ENCODE measurements at regions of chr1 and their contacts with region 1.

Region 1: DNA sequence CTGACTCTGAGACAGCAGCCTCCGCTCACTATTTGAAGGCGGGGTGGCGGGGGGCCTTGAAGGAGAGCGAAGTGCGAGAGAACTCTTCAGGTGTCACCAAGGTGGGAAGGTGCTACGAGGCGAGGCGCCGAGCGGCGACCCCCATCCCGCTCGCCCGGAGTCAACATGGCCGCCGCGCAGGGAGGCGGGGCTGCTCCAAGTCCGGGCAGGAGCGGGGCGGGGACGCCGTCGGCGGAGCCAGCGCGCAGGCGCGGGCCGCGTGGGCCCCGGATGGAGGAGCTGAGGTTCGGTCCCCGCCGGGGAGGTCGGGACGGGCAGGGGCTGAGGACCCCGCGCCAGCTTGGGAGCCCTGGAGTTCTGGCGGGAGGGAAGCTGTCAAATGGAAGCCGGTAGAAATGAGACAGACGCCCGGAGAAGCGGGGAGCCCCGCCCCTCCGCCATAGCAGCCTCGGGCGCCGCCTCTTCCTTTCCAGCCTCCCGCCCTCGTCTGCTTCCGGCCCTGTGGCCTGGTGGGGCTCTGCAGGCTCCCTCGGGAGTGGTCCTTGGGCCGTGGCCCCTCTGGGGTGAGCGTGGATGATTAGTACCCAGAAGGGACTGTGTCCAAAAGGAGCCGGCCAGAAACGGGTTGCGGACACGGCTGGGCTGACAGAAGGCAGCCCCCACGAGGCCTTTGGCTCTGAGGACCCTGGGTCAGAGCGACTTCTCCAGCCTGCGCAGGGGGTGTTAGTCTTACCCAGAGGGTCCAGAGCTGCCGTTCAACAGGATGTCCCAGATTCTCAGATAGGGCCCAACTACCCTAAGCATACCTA is at the start of gene PIGV:
- DNase-seq: peak; percentile 93
- ATAC-seq: peak; percentile 74
- H3K4me3 Mint-ChIP-seq: peak within 1 kb of the TSS; percentile 81
- H3K27ac Mint-ChIP-seq: peak within 1 kb of the TSS; percentile 100
- H3K4me1 Mint-ChIP-seq: peaks cover 70% of the 10 kb centered on the region
- H3K27me3 Mint-ChIP-seq: peaks cover 2% of the 10 kb centered on the region
- total RNA-seq, gene PIGV: 8.6 to 9.7 TPM

Region 2: GRCh38 chr1:26602378-26602959 is 185.4 kb before region 1 on chr1:
- CTCF ChIA-PET with region 1: interaction called, 272 read pairs
- DNase-seq: no peak
- ATAC-seq: no peak
- H3K4me3 Mint-ChIP-seq: no peak overlapping the region
- H3K27ac Mint-ChIP-seq: no peak overlapping the region
- H3K4me1 Mint-ChIP-seq: peaks cover 15% of the 10 kb centered on the region
- H3K27me3 Mint-ChIP-seq: peaks cover 28% of the 10 kb centered on the region

Region 3: GRCh38 chr1:26677306-26678115 is 110.4 kb before region 1 on chr1:
- CTCF ChIA-PET with region 1: interaction called, 25 read pairs
- DNase-seq: peak; percentile 70
- ATAC-seq: peak; percentile 98
- H3K4me3 Mint-ChIP-seq: no peak overlapping the region
- H3K27ac Mint-ChIP-seq: peak overlapping the region; percentile 19
- H3K4me1 Mint-ChIP-seq: peaks cover 20% of the 10 kb centered on the region
- H3K27me3 Mint-ChIP-seq: no peaks in the 10 kb centered on the region

Region 4: DNA sequence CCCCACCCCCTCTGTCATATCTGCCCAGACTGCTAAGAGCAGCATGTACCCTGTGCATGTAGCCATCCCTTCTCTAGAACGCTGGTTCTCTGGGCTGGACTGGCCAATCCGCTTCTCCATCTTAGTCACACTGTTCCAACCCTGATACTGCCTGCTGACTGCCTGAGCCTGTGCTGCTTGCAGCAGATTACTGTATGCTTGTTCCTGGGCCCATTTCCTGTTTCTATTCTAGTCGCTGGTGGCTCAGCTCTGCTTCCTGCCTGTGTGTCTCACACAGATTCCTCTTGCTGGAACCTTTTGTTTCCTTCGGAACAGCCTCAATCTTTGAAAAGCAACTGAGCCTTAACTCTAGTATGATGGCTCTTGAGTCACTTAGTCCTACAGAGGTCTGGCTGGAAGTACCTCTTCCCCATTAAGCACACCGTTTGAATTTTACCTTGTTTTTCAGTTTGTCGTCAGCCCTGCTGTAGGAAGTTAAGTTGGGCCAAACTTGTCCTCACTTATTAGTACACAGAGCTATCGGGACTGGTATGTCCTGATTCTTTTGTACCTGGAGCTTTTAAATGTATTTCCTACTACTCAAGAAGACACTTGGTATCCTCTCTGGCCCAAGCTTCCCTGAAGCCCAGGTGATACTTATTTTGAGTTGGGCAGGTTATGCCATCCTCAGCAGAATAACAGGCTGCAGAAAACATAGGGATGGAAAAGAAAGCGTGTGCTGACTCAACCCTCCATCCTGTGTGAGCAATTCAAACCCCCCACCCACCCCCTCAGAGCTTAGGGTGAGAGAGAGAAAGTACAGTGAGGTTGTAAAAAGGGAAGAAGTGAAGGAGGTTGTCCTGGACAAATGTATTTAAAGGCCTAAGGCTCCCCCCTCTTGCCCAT is 43.6 kb before region 1 on chr1:
- CTCF ChIA-PET with region 1: interaction called, 22 read pairs
- DNase-seq: peak; percentile 95
- ATAC-seq: peak; percentile 99
- H3K4me3 Mint-ChIP-seq: peak overlapping the region; percentile 67
- H3K27ac Mint-ChIP-seq: peak overlapping the region; percentile 90
- H3K4me1 Mint-ChIP-seq: peaks cover 70% of the 10 kb centered on the region
- H3K27me3 Mint-ChIP-seq: no peaks in the 10 kb centered on the region

Region 5: GRCh38 chr1:26820784-26821269 is 32.9 kb after region 1 on chr1:
- CTCF ChIA-PET with region 1: interaction called, 13 read pairs
- DNase-seq: peak; percentile 64
- ATAC-seq: peak; percentile 94
- H3K4me3 Mint-ChIP-seq: peak overlapping the region; percentile 70
- H3K27ac Mint-ChIP-seq: peak overlapping the region; percentile 82
- H3K4me1 Mint-ChIP-seq: peaks cover 23% of the 10 kb centered on the region
- H3K27me3 Mint-ChIP-seq: no peaks in the 10 kb centered on the region

Region 6: DNA sequence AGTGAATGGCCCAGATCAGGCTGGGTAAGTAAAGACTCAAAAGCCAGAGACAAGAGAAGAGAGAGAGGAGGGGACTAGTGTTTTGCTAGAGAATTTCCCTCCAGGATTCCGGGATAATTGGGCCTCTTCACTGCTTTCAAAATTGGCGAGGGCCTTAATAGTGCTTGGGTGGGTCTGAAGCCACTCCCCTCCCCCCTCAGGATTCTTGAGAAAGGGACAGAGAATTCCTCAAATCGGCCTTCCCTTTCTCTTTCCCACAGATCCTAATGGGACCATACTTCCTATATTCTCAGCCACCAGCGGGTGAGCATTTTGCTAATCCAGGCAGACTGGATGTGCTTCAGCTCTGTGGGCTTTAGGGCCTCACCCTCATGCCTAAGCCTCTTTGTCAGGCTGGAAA is 87.0 kb after region 1 on chr1:
- CTCF ChIA-PET with region 1: interaction called, 10 read pairs
- DNase-seq: no peak
- ATAC-seq: no peak
- H3K4me3 Mint-ChIP-seq: no peak overlapping the region
- H3K27ac Mint-ChIP-seq: peak overlapping the region; percentile 24
- H3K4me1 Mint-ChIP-seq: peaks cover 6% of the 10 kb centered on the region
- H3K27me3 Mint-ChIP-seq: no peaks in the 10 kb centered on the region

Measured in activated CD8-positive, alpha-beta memory T cell treated with anti-CD3 and anti-CD28 coated beads, Interleukin-2, amount 10 ng/mL, durations not matched to agents 7 days and 5 days (primary cell).